Right ventricle myocardium inferior (tissue), 1 donor: ENCODE measurements at regions of chr4 and their contacts with region 1.

Region 1: GRCh38 chr4:1870578-1871443 is at the start of gene NSD2:
- DNase-seq: peak; percentile 94
- ATAC-seq: peak; percentile 86
- total RNA-seq, gene NSD2: 37.0 TPM

Region 2: DNA sequence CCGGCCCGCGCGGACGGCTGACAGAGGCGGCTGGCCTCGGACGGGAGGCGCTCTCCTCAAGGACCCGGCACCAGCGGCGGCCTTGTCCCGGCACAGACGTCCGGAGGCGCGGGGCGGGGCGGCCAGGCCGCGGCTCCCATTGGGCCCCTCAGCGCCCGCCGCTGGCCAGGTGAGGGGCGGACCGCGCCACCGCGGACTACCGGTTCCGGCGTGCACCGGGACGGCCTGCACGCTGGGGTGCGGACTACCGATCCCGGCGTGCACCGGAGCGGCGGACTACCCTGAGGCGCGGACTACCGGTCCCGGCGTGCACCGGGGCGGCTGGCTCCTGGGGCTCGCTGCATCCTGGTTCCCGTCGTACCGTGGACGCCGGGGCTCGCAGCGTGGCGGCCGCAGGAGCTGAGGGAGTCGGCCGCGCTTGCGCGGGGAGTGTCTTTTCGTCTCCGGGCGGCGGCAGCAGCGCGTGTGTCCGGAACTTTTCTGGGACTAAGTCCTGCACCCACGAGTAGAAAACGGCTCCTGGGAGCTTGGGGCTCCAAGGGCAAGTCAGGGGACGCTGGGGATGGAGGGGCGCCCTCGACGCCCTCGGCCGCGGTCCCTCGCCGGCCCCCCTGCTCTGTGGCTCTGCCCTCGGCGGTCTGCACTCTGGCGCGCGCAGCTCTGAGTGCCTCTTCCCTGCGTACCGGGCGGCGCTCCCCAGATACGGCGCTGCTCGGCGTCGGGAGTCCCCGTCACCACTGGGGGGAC is 14.6 kb before region 1 on chr4 and contains the start of gene LETM1:
- intact Hi-C with region 1: loop called (anchors 1 kb)
- DNase-seq: peak; percentile 98
- ATAC-seq: peak; percentile 98
- total RNA-seq, gene LETM1: 39.8 TPM